T-cell (primary cell): ENCODE measurements at regions of chr2 and their contacts with region 1.

Region 1: DNA sequence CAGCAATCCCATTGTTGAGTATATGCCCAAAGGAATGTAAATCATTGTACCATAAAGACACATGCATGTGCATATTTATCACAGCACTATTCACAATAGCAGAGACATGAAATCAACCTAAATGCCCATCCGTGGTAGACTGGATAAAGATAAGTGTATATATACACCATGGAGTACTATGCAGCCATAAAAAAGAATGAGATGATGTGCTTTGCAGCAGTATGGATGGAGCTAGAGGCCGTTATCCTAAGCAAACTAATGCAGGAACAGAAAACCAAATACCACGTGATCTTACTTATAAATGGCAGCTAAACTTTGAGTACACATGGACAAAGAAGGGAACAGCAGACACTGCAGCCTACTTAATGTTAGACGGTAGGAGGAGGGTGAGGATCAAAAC is 18.4 kb upstream of the RAMP1 start:
- DNase-seq: no peak
- ATAC-seq: no peak
- H3K4me3 ChIP-seq: no peak overlapping the region
- H3K4me3 Mint-ChIP-seq: no peak overlapping the region
- H3K27ac ChIP-seq: no peak overlapping the region
- H3K27ac Mint-ChIP-seq: no peak overlapping the region
- H3K4me1 ChIP-seq: no peaks in the 10 kb centered on the region
- H3K4me1 Mint-ChIP-seq: no peaks in the 10 kb centered on the region
- H3K27me3 ChIP-seq: no peaks in the 10 kb centered on the region
- H3K27me3 Mint-ChIP-seq: peaks cover 0 to 3% of the 10 kb centered on the region in 2 donors

Region 2: DNA sequence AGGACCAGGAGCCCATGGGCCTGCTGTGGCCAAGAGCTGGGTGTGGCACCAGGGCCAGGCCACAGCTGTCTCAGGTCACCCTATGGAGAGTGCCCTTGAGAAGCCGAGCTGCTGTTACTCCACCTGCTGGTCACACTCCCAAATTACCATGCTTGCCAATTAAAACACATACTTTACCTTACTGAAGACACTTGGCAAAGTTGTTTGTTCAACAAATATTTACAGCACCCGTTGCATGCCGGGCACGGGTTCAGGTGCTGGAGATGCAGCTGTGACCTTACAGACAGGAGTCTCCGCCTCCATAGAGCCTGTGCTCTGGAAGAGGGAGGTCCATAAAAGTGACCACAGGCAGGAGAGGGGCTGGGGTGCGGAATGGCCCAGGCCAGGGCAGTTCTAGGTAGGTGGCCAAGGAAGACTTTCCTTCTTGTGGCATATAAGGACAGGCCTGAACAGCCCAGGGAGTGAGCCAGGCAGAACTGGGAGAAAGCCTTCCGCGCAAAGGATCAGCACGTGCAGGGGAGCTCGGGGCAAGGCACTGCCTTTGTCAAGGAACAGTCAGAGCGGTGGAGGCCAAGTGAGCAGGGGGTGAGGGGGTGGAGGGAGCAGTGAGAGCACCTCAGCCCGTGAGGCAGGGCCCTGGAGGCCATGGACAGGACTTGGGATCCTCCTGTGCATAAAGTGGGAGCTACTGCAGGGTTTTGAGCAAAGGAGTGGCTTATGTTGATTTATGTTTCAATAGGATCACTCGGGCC is 66.1 kb before region 1 on chr2:
- CTCF ChIA-PET with region 1: no interaction called
- POLR2A ChIA-PET with region 1: no interaction called
- DNase-seq: peak in 23 of 35 experiments; percentile 8 to 59 (median 17)
- ATAC-seq: peak; percentile 45 to 59 (median 52)
- H3K4me3 ChIP-seq: no peak overlapping the region
- H3K4me3 Mint-ChIP-seq: no peak overlapping the region
- H3K27ac ChIP-seq: no peak overlapping the region
- H3K27ac Mint-ChIP-seq: peak overlapping the region in 1 of 2 donors; percentile 68
- H3K4me1 ChIP-seq: no peaks in the 10 kb centered on the region
- H3K4me1 Mint-ChIP-seq: peaks cover 0 to 5% (median 0%) of the 10 kb centered on the region in 3 donors
- H3K27me3 ChIP-seq: no peaks in the 10 kb centered on the region
- H3K27me3 Mint-ChIP-seq: no peaks in the 10 kb centered on the region

Region 3: DNA sequence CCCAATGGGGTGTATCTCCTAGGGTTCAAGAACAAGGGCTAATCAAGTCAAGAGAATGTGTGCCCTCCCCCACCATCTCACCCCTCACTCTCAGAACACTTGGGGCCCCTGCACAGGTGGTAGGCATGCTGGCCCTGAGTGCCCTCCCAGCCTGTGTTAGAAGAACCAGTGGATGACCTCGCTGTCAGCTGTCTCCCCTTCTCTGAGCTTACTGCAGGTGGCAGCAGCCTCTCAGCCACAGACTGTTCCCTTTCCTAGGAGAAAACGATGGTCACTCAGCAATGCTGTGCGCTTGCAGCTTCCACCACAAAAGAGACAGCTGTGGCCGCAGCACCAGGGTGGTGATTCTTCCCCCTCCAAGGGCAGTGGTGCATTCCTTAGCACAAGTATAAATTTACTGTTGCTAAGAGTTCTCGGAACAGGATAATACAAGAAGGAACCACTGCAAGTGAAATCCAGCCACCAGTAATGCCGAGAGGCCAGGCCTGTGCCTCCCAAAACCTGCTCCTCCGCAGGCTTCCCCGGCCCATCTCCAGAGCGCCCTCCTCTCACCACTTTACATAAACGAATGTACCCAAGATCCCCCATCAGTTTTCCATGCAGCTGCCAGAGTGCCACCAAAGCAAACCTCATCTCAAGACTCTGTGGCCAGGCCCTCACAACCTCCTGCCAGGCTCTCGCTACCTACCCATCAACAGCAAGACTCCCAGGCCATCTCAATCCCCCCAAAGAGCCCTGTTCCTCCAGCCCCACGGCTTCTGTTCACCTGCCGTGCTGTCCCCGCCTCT is 17.4 kb after region 1 on chr2:
- CTCF ChIA-PET with region 1: no interaction called
- POLR2A ChIA-PET with region 1: no interaction called
- DNase-seq: peak in 22 of 35 experiments; percentile 13 to 65 (median 25)
- ATAC-seq: peak; percentile 48 to 76 (median 66)
- H3K4me3 ChIP-seq: no peak overlapping the region
- H3K4me3 Mint-ChIP-seq: peak overlapping the region in 2 of 3 donors; percentile 49 to 71
- H3K27ac ChIP-seq: no peak overlapping the region
- H3K27ac Mint-ChIP-seq: no peak overlapping the region
- H3K4me1 ChIP-seq: peaks cover 0 to 18% of the 10 kb centered on the region in 2 experiments
- H3K4me1 Mint-ChIP-seq: peaks cover 8 to 16% (median 10%) of the 10 kb centered on the region in 3 donors
- H3K27me3 ChIP-seq: peaks cover 2 to 52% of the 10 kb centered on the region in 2 experiments
- H3K27me3 Mint-ChIP-seq: peaks cover 32 to 35% of the 10 kb centered on the region in 2 donors

Region 4: DNA sequence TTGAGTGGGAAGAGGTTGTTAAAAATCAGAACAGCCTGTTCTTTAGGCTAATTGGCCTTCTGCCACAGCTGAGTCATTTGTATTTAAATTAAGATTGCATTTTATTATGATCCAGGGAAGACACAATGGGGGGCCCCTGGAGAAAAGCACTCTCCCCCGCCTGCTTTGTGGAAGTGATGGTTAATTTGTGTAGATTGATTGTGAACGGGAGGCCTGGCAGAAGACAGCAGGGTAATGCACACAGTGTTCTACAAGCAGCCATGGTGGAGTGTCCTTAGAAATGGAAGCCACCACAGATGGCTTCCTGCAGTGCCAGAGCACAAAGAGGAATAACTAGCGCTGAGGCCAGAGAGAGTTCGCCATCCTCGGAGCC is 38.0 kb after region 1 on chr2:
- CTCF ChIA-PET with region 1: no interaction called
- POLR2A ChIA-PET with region 1: no interaction called
- DNase-seq: no peak
- ATAC-seq: no peak
- H3K4me3 ChIP-seq: no peak overlapping the region
- H3K4me3 Mint-ChIP-seq: no peak overlapping the region
- H3K27ac ChIP-seq: no peak overlapping the region
- H3K27ac Mint-ChIP-seq: no peak overlapping the region
- H3K4me1 ChIP-seq: peaks cover 0 to under 1% of the 10 kb centered on the region in 2 experiments
- H3K4me1 Mint-ChIP-seq: no peaks in the 10 kb centered on the region
- H3K27me3 ChIP-seq: peaks cover 0 to 22% of the 10 kb centered on the region in 2 experiments
- H3K27me3 Mint-ChIP-seq: no peaks in the 10 kb centered on the region

Region 5: DNA sequence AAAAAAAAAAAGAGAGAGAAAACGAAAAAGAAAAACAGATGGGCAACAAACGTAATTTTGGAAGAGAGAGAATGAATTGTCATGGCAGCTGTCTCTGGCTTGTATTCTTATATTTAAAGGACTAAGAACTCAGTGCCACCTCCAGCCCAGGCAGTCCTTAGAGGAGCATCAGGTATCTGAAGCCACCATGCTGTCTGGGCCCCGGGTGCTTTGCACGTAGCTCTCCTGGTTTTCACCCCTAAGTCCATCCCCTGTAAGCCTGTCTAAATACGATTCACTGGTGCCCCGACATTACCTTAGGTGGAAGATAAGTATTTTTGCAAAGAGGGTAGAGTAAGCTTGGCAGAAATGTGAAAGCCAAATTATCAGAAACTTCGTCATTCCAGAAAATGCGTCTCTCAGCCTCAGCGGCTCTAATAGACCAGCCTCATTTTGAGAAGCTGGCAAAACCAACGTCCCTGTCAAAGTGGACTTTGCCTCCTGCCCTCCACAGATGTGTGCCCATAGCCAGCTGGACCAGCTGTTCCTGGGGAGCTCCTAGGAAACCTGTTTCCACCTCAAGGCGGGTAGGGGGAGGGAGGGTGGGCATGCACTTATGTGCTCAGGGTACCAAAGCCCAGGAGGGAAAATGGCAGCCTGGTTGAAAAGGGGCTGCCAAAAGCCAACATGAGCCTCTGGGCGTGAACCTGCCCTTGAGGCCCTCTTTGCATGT is 443.6 kb after region 1 on chr2:
- CTCF ChIA-PET with region 1: no interaction called
- POLR2A ChIA-PET with region 1: interaction called in 1 of 2 experiments, 12 read pairs
- DNase-seq: no peak
- ATAC-seq: no peak
- H3K4me3 ChIP-seq: no peak overlapping the region
- H3K4me3 Mint-ChIP-seq: no peak overlapping the region
- H3K27ac ChIP-seq: no peak overlapping the region
- H3K27ac Mint-ChIP-seq: no peak overlapping the region
- H3K4me1 ChIP-seq: peaks cover 4 to 27% of the 10 kb centered on the region in 2 experiments
- H3K4me1 Mint-ChIP-seq: peaks cover 50 to 67% (median 61%) of the 10 kb centered on the region in 3 donors
- H3K27me3 ChIP-seq: no peaks in the 10 kb centered on the region
- H3K27me3 Mint-ChIP-seq: no peaks in the 10 kb centered on the region

Region 6: GRCh38 chr2:238509151-238509835 is 668.2 kb after region 1 on chr2:
- CTCF ChIA-PET with region 1: no interaction called
- POLR2A ChIA-PET with region 1: no interaction called
- DNase-seq: no peak
- ATAC-seq: no peak
- H3K4me3 ChIP-seq: no peak overlapping the region
- H3K4me3 Mint-ChIP-seq: no peak overlapping the region
- H3K27ac ChIP-seq: no peak overlapping the region
- H3K27ac Mint-ChIP-seq: no peak overlapping the region
- H3K4me1 ChIP-seq: no peaks in the 10 kb centered on the region
- H3K4me1 Mint-ChIP-seq: peaks cover 0 to 4% (median 0%) of the 10 kb centered on the region in 3 donors
- H3K27me3 ChIP-seq: peaks cover 0 to 25% of the 10 kb centered on the region in 2 experiments
- H3K27me3 Mint-ChIP-seq: peaks cover 0 to 4% of the 10 kb centered on the region in 2 donors